ENCODE measurements at regions of chr3 and their contacts with region 1.

Region 1: DNA sequence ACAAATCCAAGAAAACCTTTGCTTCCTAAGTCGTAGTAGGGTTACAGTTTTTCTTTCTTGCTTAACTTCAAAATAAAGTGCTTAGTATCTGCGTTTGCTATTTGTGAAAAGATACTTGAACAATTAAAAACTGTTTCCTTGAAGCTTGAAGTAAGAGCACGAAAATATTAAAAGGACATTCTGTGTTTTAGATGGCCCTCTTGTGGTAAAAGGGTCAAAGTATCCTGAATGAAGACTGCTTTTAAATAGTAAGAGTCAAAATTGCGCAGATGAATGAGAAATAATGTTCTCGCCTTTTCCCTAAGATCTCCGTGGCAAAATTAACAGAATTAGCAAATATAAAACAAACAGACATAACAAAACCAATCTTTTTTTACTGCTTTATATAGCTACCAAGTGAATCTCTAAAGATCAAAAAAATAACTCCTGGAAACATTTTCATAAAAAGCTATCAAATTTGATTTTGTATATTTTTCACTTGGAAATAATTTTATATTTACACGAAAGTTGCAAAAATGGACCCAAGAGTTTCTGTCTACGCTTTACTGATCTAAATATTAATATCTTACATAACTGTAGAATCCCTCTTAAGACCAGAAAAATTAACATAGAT is 175.4 kb downstream of the MBNL1 start:
- DNase-seq: peak; percentile 68
- H3K4me3 Mint-ChIP-seq: no peak overlapping the region
- H3K27ac Mint-ChIP-seq: no peak overlapping the region
- H3K4me1 Mint-ChIP-seq: peaks cover 18% of the 10 kb centered on the region
- H3K27me3 Mint-ChIP-seq: no peaks in the 10 kb centered on the region
- CTCF ChIP-seq: peak; percentile 56

Region 2: DNA sequence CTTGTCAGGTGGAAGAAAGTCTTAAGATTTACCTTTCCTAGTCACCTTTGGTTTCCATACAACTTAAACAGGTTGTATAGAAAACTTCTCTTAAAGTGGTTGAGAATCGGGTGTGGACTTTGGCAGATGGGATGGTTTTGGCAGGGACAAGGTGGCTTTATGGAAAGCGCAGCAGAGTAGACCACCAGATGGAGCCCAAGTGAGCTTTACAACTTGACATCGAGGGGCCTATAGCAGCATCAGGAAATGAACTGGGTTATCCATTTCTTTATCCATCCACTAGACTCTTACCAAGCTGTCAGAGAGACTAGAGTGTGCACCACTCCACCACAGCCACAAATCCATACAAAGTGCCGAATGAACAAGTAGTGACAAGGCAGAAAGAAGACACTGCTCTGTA is 260.7 kb before region 1 on chr3:
- CTCF ChIA-PET with region 1: no interaction called
- POLR2A ChIA-PET with region 1: no interaction called
- intact Hi-C with region 1: loop called (anchors 2 kb)
- DNase-seq: peak; percentile 35
- H3K4me3 Mint-ChIP-seq: no peak overlapping the region
- H3K27ac Mint-ChIP-seq: no peak overlapping the region
- H3K4me1 Mint-ChIP-seq: no peaks in the 10 kb centered on the region
- H3K27me3 Mint-ChIP-seq: no peaks in the 10 kb centered on the region
- CTCF ChIP-seq: no peak

Region 3: DNA sequence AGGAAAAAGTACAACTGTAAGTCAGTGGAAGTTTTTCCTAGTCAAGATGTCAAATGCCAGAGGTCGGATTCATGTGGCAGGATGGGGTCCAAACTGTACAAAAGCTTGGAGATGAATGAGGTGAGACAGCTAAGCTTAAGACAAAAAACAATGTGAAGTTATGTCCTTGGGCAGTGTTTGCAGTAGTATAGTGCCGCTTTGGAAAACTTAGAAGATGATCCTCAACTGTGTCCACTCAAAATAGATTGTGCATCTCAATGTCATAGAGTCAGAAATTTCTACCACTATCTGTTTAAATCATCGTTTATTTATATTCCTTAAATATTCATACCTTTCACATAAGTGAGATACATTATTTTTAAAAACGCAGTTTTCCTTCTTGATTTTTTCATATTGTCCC is 98.1 kb before region 1 on chr3:
- CTCF ChIA-PET with region 1: no interaction called
- POLR2A ChIA-PET with region 1: no interaction called
- intact Hi-C with region 1: no loop called
- DNase-seq: no peak
- H3K4me3 Mint-ChIP-seq: no peak overlapping the region
- H3K27ac Mint-ChIP-seq: no peak overlapping the region
- H3K4me1 Mint-ChIP-seq: no peaks in the 10 kb centered on the region
- H3K27me3 Mint-ChIP-seq: no peaks in the 10 kb centered on the region
- CTCF ChIP-seq: no peak

Measured in MCF 10A (cell line).